Aorta (tissue), 5 donors: ENCODE measurements at regions of chr10 and their contacts with region 1.

Region 1: DNA sequence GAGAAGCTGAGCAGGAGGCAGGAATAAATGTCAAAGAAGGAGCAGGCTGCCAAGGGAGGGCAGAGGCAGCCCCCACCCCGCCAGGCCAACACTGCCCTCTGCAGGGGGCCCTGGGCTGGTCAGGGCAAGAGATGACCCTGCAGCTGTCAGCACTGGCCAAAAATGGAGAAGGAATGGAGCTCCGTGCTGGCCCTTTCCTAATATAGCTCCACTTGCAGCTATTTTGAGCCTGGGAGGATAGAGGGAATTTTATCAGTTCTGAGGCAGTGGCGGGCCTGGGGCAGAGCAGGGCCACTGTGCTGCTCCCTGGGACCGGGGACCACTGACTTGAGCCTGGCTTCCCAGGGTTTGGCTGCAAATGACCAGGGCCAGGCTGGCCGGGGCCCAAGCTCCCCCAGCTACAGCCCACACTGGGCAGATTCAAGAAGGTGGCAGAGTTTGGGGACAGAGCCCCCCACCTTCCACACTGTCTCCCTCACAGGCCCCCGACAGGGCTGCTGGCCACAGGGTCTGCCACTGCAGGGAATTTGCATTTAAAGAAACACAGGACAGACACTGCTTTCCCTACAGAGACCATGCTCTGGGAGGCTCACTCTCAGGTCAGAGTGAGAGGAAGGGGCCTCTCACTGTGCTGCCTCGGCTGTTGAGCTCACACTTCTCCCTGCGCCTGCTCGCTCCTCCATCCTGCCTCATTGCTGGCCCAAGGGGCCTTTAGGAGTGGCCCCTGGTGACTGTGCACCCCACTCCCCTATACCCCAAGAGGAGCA is 16.2 kb downstream of the LDB3 start:
- DNase-seq: peak; percentile 77 to 87
- ATAC-seq: peak; percentile 70
- H3K4me3 ChIP-seq: no peak overlapping the region
- H3K27ac ChIP-seq: peak overlapping the region; percentile 51 to 70
- H3K4me1 ChIP-seq: peaks cover 0 to 5% of the 10 kb centered on the region in 2 donors
- H3K27me3 ChIP-seq: no peaks in the 10 kb centered on the region

Region 2: GRCh38 chr10:86644152-86644793 is 40.2 kb before region 1 on chr10:
- intact Hi-C with region 1: loop called in 1 of 2 experiments (anchors 5 kb)
- DNase-seq: no peak
- ATAC-seq: no peak
- H3K4me3 ChIP-seq: no peak overlapping the region
- H3K27ac ChIP-seq: no peak overlapping the region
- H3K4me1 ChIP-seq: peaks cover 0 to 2% of the 10 kb centered on the region in 2 donors
- H3K27me3 ChIP-seq: no peaks in the 10 kb centered on the region